CD4-positive, alpha-beta memory T cell (primary cell): ENCODE measurements at regions of chr15 and their contacts with region 1.

Region 1: GRCh38 chr15:42495361-42496212 is at the start of gene SNAP23:
- DNase-seq: peak; percentile 79 to 89 (median 80)
- H3K4me3 ChIP-seq: peak within 1 kb of the TSS; percentile 77 to 88
- H3K4me3 Mint-ChIP-seq: peak within 1 kb of the TSS; percentile 93 to 99 (median 96)
- H3K27ac ChIP-seq: peak within 1 kb of the TSS; percentile 72
- H3K27ac Mint-ChIP-seq: peak within 1 kb of the TSS; percentile 89 to 99 (median 96)
- H3K4me1 ChIP-seq: peaks cover 44% of the 10 kb centered on the region
- H3K4me1 Mint-ChIP-seq: peaks cover 36 to 76% (median 60%) of the 10 kb centered on the region in 4 donors
- H3K27me3 ChIP-seq: no peaks in the 10 kb centered on the region
- H3K27me3 Mint-ChIP-seq: no peaks in the 10 kb centered on the region
- total RNA-seq, gene SNAP23: 70.6 to 72.0 TPM

Region 2: DNA sequence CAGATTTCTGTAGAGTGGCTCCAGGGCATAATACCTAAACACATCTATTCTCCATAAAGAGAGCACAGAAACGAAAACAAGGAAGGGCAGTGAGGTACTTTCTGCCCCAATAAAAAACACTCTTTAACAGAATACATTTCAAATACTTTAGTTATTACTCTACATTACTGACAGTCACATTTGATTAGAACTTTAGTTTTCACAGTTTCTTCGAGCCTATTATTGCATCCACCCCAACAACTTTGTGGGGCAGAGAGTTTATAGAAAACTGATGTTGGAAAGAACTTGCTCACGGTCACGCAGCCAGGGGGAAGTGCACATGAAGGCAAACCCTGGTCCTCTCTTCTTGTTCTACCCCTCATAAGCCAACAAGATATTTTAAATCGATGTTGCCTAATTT is 296.5 kb before region 1 on chr15:
- CTCF ChIA-PET with region 1: no interaction called
- POLR2A ChIA-PET with region 1: no interaction called
- intact Hi-C with region 1: no loop called
- DNase-seq: no peak
- H3K4me3 ChIP-seq: no peak overlapping the region
- H3K4me3 Mint-ChIP-seq: no peak overlapping the region
- H3K27ac ChIP-seq: no peak overlapping the region
- H3K27ac Mint-ChIP-seq: peak overlapping the region in 3 of 7 donors; percentile 52 to 91 (median 66)
- H3K4me1 ChIP-seq: peaks cover 4% of the 10 kb centered on the region
- H3K4me1 Mint-ChIP-seq: peaks cover 11 to 41% (median 24%) of the 10 kb centered on the region in 4 donors
- H3K27me3 ChIP-seq: no peaks in the 10 kb centered on the region
- H3K27me3 Mint-ChIP-seq: no peaks in the 10 kb centered on the region

Region 3: DNA sequence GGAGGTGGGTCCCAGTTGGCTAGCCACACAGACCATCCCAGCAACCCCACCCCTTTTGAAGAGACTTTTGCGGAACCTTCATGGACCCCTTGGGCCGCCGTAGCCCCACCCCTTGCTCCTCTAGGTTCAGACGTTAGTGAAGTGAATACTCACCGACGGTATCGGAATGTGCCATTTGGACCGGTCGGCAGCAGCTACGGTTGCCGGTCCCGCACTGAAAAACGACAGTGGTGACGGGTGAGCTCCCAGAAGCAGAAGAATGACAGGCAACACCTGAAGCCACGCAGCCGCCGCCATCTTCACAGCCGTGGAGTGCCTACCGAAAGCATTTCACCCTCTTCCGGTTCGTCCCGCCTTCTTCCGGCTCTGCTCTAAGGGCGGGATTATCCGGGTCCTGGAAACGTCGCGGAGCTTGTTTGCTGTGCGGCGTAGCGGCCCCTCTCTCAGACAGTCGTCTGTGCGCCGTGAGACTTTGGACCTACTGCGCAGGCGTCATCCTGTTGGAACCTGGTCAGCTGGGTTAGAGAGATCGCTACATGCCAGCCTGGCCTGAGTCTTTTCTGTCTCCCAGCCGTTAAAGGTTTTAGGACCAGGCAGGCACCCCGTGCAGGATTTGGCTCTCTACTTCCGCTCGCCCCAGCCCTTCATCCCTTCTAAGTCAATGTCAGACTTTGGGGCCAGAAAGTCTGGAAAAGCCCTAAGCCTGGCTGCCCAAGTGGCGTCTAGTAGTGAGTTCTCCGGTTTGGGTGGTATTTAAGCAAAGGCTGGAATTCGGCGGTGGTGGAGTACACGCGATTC is 222.3 kb before region 1 on chr15 and contains the starts of genes GANC and TMEM87A:
- CTCF ChIA-PET with region 1: no interaction called
- POLR2A ChIA-PET with region 1: interaction called, 15 read pairs
- intact Hi-C with region 1: loop called (anchors 5 kb)
- DNase-seq: peak; percentile 94 to 98 (median 95)
- H3K4me3 ChIP-seq: peak within 1 kb of the TSS; percentile 73 to 98
- H3K4me3 Mint-ChIP-seq: peak within 1 kb of the TSS; percentile 92 to 100 (median 99)
- H3K27ac ChIP-seq: peak within 1 kb of the TSS; percentile 87
- H3K27ac Mint-ChIP-seq: peak within 1 kb of the TSS; percentile 95 to 100 (median 99)
- H3K4me1 ChIP-seq: peaks cover 52% of the 10 kb centered on the region
- H3K4me1 Mint-ChIP-seq: peaks cover 38 to 69% (median 53%) of the 10 kb centered on the region in 4 donors
- H3K27me3 ChIP-seq: no peaks in the 10 kb centered on the region
- H3K27me3 Mint-ChIP-seq: peaks cover 0 to 2% of the 10 kb centered on the region in 2 donors
- total RNA-seq, gene GANC: 61.7 to 63.4 TPM
- total RNA-seq, gene TMEM87A: 49.9 to 56.6 TPM

Region 4: GRCh38 chr15:42471002-42471401 is 24.6 kb before region 1 on chr15:
- CTCF ChIA-PET with region 1: interaction called, 4 read pairs
- POLR2A ChIA-PET with region 1: interaction called, 5 read pairs
- intact Hi-C with region 1: loop called (anchors 2 kb)
- DNase-seq: no peak
- H3K4me3 ChIP-seq: no peak overlapping the region
- H3K4me3 Mint-ChIP-seq: no peak overlapping the region
- H3K27ac ChIP-seq: no peak overlapping the region
- H3K27ac Mint-ChIP-seq: peak overlapping the region in 4 of 7 donors; percentile 2 to 89 (median 78)
- H3K4me1 ChIP-seq: no peaks in the 10 kb centered on the region
- H3K4me1 Mint-ChIP-seq: peaks cover 7 to 12% (median 9%) of the 10 kb centered on the region in 4 donors
- H3K27me3 ChIP-seq: no peaks in the 10 kb centered on the region
- H3K27me3 Mint-ChIP-seq: no peaks in the 10 kb centered on the region

Region 5: DNA sequence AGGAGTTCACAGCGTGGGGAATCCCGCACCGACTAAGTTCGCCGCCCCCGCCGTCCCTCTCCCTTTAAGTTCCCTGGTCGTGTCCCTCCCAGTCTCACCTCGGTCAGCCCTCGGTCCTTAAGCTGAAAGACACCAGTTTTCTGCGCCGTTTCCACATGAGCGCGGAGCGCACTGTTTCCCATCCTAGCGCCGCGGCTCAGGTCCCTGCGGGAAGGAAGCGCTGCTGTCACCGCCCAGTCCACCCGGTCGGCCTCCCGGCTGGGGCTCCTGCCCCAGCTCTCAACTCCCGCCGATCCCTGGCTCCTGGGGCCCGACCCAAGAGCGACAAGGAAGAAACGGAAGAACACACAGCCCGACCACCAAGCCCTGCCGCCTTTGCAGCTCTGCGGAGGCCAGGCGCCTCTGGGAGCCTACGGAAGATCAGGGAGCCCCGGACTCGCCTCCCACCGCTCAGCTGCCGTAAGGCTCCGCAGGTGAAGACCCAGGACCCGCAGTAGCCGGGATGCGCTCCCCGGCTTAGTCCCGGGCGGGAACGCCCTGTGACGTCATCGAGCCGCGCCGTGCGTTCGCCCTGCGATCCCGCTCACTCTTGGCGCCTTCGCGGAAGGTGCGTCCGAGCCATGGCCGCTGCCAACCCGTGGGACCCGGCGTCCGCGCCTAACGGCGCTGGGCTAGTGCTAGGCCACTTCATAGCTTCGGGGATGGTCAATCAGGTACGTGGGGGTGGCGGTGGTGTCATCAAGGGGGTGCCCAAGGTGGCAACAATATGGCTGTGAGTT is 52.9 kb after region 1 on chr15 and contains the starts of genes HAUS2 and LRRC57:
- CTCF ChIA-PET with region 1: interaction called, 5 read pairs
- POLR2A ChIA-PET with region 1: interaction called, 42 read pairs
- intact Hi-C with region 1: loop called (anchors 2 kb)
- DNase-seq: peak; percentile 85 to 89 (median 86)
- H3K4me3 ChIP-seq: peak within 1 kb of the TSS; percentile 92 to 99
- H3K4me3 Mint-ChIP-seq: peak within 1 kb of the TSS; percentile 93 to 100 (median 96)
- H3K27ac ChIP-seq: peak within 1 kb of the TSS; percentile 88
- H3K27ac Mint-ChIP-seq: peak within 1 kb of the TSS; percentile 87 to 100 (median 98)
- H3K4me1 ChIP-seq: peaks cover 52% of the 10 kb centered on the region
- H3K4me1 Mint-ChIP-seq: peaks cover 36 to 71% (median 53%) of the 10 kb centered on the region in 4 donors
- H3K27me3 ChIP-seq: no peaks in the 10 kb centered on the region
- H3K27me3 Mint-ChIP-seq: no peaks in the 10 kb centered on the region
- total RNA-seq, gene HAUS2: 16.4 to 20.0 TPM
- total RNA-seq, gene LRRC57: 19.0 to 20.0 TPM

Region 6: DNA sequence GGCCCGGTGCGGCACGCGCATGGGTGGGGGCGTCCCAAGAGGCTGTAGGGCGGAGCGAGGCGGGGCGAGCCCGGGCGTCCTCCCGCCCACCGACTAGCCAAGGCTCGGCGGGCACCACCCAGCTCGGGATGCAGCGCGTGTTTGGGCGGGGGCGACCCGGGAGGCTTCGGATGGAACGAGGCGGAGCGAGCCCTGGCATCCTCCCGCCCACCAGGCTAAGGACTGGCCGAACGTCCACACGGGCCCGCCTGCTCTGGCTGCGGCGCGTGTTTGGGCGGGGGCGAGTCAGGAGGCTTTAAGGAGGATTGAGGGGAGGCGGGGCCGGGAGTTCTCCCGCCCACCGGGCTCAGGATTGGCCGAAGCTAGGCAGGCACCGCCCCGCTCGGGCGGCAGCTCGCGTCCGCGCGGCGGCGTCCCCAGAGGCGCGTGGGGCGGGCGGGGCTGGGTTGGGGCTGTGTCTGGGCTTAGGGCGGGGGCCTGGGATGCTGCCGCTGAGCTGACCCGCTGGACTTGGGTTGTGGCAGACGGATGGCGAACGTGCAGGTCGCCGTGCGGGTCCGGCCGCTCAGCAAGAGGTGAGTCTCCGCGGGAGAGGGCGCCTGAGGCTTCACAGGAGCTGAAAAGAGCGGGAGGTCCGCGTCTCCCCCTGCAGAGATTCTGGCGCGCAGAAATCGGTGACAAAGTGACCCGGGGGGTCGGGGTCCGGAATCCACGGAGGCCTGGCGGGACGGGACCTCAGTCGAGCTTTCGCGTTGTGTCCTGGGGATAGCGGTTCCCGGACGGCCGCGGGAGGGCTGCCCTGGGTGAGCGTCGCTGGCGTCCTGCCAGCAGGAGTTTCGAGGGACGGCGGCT is 79.8 kb after region 1 on chr15 and contains the start of gene STARD9:
- CTCF ChIA-PET with region 1: no interaction called
- POLR2A ChIA-PET with region 1: interaction called, 22 read pairs
- intact Hi-C with region 1: loop called (anchors 1 kb)
- DNase-seq: peak; percentile 93 to 95 (median 93)
- H3K4me3 ChIP-seq: peak within 1 kb of the TSS; percentile 78 to 89
- H3K4me3 Mint-ChIP-seq: peak within 1 kb of the TSS; percentile 89 to 96 (median 92)
- H3K27ac ChIP-seq: peak within 1 kb of the TSS; percentile 44
- H3K27ac Mint-ChIP-seq: peak within 1 kb of the TSS; percentile 78 to 94 (median 86)
- H3K4me1 ChIP-seq: peaks cover 16% of the 10 kb centered on the region
- H3K4me1 Mint-ChIP-seq: peaks cover 11 to 34% (median 17%) of the 10 kb centered on the region in 4 donors
- H3K27me3 ChIP-seq: no peaks in the 10 kb centered on the region
- H3K27me3 Mint-ChIP-seq: peaks cover 6 to 12% of the 10 kb centered on the region in 2 donors
- total RNA-seq, gene STARD9: 4.5 to 6.1 TPM

Region 7: GRCh38 chr15:42581272-42581730 is 85.7 kb after region 1 on chr15:
- CTCF ChIA-PET with region 1: no interaction called
- POLR2A ChIA-PET with region 1: interaction called, 22 read pairs
- intact Hi-C with region 1: no loop called
- DNase-seq: peak; percentile 73 to 79 (median 77)
- H3K4me3 ChIP-seq: peak overlapping the region in 1 of 2 donors; percentile 51
- H3K4me3 Mint-ChIP-seq: peak overlapping the region; percentile 89 to 95 (median 91)
- H3K27ac ChIP-seq: peak overlapping the region; percentile 50
- H3K27ac Mint-ChIP-seq: peak overlapping the region; percentile 60 to 96 (median 94)
- H3K4me1 ChIP-seq: peaks cover 20% of the 10 kb centered on the region
- H3K4me1 Mint-ChIP-seq: peaks cover 15 to 41% (median 23%) of the 10 kb centered on the region in 4 donors
- H3K27me3 ChIP-seq: no peaks in the 10 kb centered on the region
- H3K27me3 Mint-ChIP-seq: peaks cover 6 to 11% of the 10 kb centered on the region in 2 donors

Region 8: DNA sequence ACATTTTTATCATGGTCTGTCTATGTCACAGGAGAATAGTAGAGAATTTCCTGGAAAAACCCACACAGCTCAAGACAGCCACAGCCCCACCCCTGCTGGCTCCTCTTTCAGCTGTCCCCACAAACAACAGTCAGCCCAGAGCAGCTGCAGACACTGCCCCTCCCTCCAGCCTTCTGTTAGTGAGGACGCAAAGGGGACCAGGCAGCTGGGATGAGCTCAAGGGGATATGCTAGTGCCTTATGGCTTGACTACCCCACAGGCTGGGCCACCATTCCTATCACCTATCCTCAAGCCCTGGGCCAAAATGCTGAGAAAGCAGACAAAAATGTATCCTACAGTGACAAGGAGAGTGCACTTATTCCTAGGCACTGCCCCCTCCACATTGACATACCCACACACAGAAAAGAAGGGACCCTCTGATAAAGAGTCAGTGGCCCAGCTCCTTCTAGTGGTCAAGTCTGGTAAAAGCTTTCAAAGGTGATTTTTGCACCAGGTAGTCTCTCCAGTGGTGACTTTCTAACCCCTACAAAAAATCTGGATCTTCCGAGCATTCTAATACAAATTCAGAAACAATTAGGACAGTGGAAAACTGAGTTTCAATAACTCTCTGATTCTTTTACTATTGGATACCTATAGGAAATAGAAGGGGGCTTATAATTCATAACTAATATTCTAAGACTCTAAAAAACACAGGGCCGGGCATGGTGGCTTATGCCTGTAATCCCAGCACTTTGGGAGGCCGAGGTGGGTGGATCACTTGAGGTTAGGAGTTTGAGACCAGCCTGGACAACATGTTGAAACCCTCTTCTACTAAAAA is 1018.9 kb after region 1 on chr15:
- CTCF ChIA-PET with region 1: no interaction called
- POLR2A ChIA-PET with region 1: no interaction called
- intact Hi-C with region 1: no loop called
- DNase-seq: peak in 3 of 5 donors; percentile 28 to 34 (median 33)
- H3K4me3 ChIP-seq: no peak overlapping the region
- H3K4me3 Mint-ChIP-seq: peak overlapping the region in 3 of 8 donors; percentile 22 to 60 (median 32)
- H3K27ac ChIP-seq: no peak overlapping the region
- H3K27ac Mint-ChIP-seq: peak overlapping the region; percentile 35 to 83 (median 58)
- H3K4me1 ChIP-seq: peaks cover 31% of the 10 kb centered on the region
- H3K4me1 Mint-ChIP-seq: peaks cover 23 to 41% (median 34%) of the 10 kb centered on the region in 4 donors
- H3K27me3 ChIP-seq: peaks cover 8% of the 10 kb centered on the region
- H3K27me3 Mint-ChIP-seq: peaks cover 5 to 18% of the 10 kb centered on the region in 2 donors